ENCODE measurements at regions of chr5 and their contacts with region 1.

Region 1: GRCh38 chr5:128201065-128201926 is 117.7 kb downstream of the SLC12A2 start:
- DNase-seq: peak; percentile 90
- ATAC-seq: peak; percentile 95
- H3K4me3 Mint-ChIP-seq: no peak overlapping the region
- H3K27ac Mint-ChIP-seq: no peak overlapping the region
- H3K4me1 Mint-ChIP-seq: peaks cover 34% of the 10 kb centered on the region
- H3K27me3 Mint-ChIP-seq: peaks cover 3% of the 10 kb centered on the region
- CTCF ChIP-seq: peak; percentile 89

Region 2: GRCh38 chr5:127564002-127564769 is 637.1 kb before region 1 on chr5:
- CTCF ChIA-PET with region 1: interaction called, 9 read pairs
- POLR2A ChIA-PET with region 1: no interaction called
- intact Hi-C with region 1: loop called (anchors 2 kb)
- DNase-seq: peak; percentile 74
- ATAC-seq: peak; percentile 89
- H3K4me3 Mint-ChIP-seq: no peak overlapping the region
- H3K27ac Mint-ChIP-seq: no peak overlapping the region
- H3K4me1 Mint-ChIP-seq: peaks cover 11% of the 10 kb centered on the region
- H3K27me3 Mint-ChIP-seq: peaks cover 10% of the 10 kb centered on the region
- CTCF ChIP-seq: peak; percentile 63

Region 3: GRCh38 chr5:127757576-127757975 is 443.7 kb before region 1 on chr5:
- CTCF ChIA-PET with region 1: interaction called, 11 read pairs
- POLR2A ChIA-PET with region 1: no interaction called
- intact Hi-C with region 1: no loop called
- DNase-seq: peak; percentile 36
- ATAC-seq: peak; percentile 45
- H3K4me3 Mint-ChIP-seq: no peak overlapping the region
- H3K27ac Mint-ChIP-seq: no peak overlapping the region
- H3K4me1 Mint-ChIP-seq: no peaks in the 10 kb centered on the region
- H3K27me3 Mint-ChIP-seq: no peaks in the 10 kb centered on the region
- CTCF ChIP-seq: peak; percentile 20

Region 4: GRCh38 chr5:127875235-127876021 is 325.9 kb before region 1 on chr5:
- CTCF ChIA-PET with region 1: interaction called, 10 read pairs
- POLR2A ChIA-PET with region 1: no interaction called
- intact Hi-C with region 1: loop called (anchors 5 kb)
- DNase-seq: peak; percentile 43
- ATAC-seq: peak; percentile 66
- H3K4me3 Mint-ChIP-seq: no peak overlapping the region
- H3K27ac Mint-ChIP-seq: no peak overlapping the region
- H3K4me1 Mint-ChIP-seq: no peaks in the 10 kb centered on the region
- H3K27me3 Mint-ChIP-seq: peaks cover 3% of the 10 kb centered on the region
- CTCF ChIP-seq: peak; percentile 17

Region 5: GRCh38 chr5:128084228-128085167 is 116.8 kb before region 1 on chr5:
- CTCF ChIA-PET with region 1: interaction called, 4 read pairs
- POLR2A ChIA-PET with region 1: no interaction called
- intact Hi-C with region 1: loop called (anchors 5 kb)
- DNase-seq: peak; percentile 75
- ATAC-seq: peak; percentile 35
- H3K4me3 Mint-ChIP-seq: peak overlapping the region; percentile 94
- H3K27ac Mint-ChIP-seq: peak overlapping the region; percentile 83
- H3K4me1 Mint-ChIP-seq: peaks cover 49% of the 10 kb centered on the region
- H3K27me3 Mint-ChIP-seq: no peaks in the 10 kb centered on the region
- CTCF ChIP-seq: no peak

Region 6: DNA sequence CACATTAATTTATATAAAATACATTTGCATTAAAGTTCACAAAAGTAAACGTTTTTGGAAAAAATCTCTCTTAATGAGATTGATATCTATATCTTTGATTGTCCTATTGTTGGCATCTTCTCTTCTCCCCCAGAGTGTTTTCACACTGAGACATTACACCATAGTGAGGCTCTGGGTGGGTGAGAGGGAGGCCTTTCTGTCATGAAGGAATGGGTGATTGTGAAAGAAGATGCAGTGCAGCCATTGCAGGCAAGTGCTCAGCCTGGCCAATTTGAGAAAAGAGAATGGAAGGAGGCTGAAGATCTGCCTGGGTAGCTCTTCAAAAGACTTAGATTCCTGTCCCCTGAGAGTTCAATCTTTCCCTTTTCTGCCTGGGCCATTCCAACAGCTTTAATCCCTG is 23.0 kb after region 1 on chr5:
- CTCF ChIA-PET with region 1: no interaction called
- POLR2A ChIA-PET with region 1: no interaction called
- intact Hi-C with region 1: no loop called
- DNase-seq: no peak
- ATAC-seq: no peak
- H3K4me3 Mint-ChIP-seq: no peak overlapping the region
- H3K27ac Mint-ChIP-seq: no peak overlapping the region
- H3K4me1 Mint-ChIP-seq: peaks cover 2% of the 10 kb centered on the region
- H3K27me3 Mint-ChIP-seq: peaks cover 10% of the 10 kb centered on the region
- CTCF ChIP-seq: no peak